Panc1 (cell line): ENCODE measurements at regions of chr6 and their contacts with region 1.

Region 1: DNA sequence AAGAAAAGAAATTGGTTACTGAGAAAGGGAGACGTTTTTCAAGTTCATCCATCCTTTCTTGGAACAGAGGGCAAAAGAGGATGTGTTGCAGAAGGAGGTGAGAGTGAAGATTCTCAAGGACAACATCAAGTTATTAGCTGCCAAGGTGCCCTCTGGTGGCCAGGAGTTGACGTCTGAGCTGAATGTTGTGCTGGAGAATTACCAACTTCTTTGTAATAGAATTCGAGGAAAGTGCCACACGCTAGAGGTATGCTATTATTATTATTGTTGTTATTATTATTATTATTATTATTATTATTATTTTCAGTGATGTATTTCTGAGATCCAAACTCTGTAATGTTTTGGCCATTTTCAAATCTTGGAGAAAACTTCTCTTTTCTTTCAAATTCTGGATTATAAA is 197.0 kb downstream of the UTRN start:
- DNase-seq: peak; percentile 77
- ATAC-seq: peak; percentile 93
- H3K4me3 ChIP-seq: no peak overlapping the region
- H3K27ac ChIP-seq: no peak overlapping the region
- H3K4me1 ChIP-seq: no peaks in the 10 kb centered on the region
- H3K27me3 ChIP-seq: no peaks in the 10 kb centered on the region
- CTCF ChIP-seq: peak; percentile 78

Region 2: DNA sequence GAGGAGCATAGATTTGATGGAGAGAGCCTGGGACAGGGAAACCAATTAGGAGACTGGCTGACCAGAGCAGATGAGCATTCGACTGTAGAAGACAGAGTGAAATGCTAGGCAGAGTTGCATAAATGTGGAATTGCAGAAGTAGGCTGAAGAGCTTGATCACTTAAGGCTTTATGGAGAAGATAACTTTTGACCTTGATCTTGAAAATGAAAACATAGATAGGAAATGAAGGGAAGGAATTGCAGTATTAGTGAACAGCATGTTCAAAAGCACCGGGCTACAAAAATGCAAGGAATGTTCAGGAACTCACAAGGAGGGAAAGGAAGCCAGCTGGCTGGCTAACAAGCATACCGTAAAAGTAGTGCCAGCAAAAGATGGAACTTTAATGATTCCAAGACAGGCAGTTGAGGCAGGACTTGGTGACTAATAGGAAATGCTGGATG is 659.5 kb before region 1 on chr6:
- CTCF ChIA-PET with region 1: no interaction called
- POLR2A ChIA-PET with region 1: no interaction called
- in situ Hi-C with region 1: no loop called
- intact Hi-C with region 1: no loop called
- DNase-seq: no peak
- ATAC-seq: no peak
- H3K4me3 ChIP-seq: no peak overlapping the region
- H3K27ac ChIP-seq: no peak overlapping the region; the same call in 1 of the 2 replicates
- H3K4me1 ChIP-seq: peaks cover 10% of the 10 kb centered on the region
- H3K27me3 ChIP-seq: no peaks in the 10 kb centered on the region
- CTCF ChIP-seq: no peak

Region 3: GRCh38 chr6:144104898-144105487 is 377.1 kb before region 1 on chr6:
- CTCF ChIA-PET with region 1: interaction called, 5 read pairs
- POLR2A ChIA-PET with region 1: interaction called, 4 read pairs
- in situ Hi-C with region 1: loop called (anchors 25 kb)
- intact Hi-C with region 1: loop called (anchors 1 kb)
- DNase-seq: peak; percentile 70
- ATAC-seq: peak; percentile 89
- H3K4me3 ChIP-seq: no peak overlapping the region
- H3K27ac ChIP-seq: no peak overlapping the region
- H3K4me1 ChIP-seq: no peaks in the 10 kb centered on the region
- H3K27me3 ChIP-seq: no peaks in the 10 kb centered on the region
- CTCF ChIP-seq: peak; percentile 72; the same call in 1 of the 2 replicates

Region 4: DNA sequence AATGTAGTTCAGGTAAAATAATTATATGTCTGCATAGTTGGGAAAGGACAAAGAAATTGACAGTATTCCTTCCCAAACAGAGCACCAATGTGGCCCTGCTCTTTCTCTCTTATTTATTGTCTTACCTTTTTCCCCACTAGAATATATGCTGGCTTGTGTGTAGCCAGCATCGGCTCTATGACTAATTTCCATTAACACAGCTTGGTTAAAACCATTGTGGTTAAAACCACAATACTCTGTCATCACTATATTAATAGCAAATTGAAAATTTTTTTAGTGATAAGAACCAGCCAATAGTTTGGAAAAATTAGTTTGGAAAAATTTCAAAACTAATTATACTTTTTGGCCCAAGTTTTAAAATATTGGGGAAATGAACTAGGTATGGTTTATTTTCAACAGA is 338.1 kb after region 1 on chr6:
- CTCF ChIA-PET with region 1: no interaction called
- POLR2A ChIA-PET with region 1: no interaction called
- in situ Hi-C with region 1: no loop called
- intact Hi-C with region 1: no loop called
- DNase-seq: no peak
- ATAC-seq: no peak
- H3K4me3 ChIP-seq: no peak overlapping the region
- H3K27ac ChIP-seq: no peak overlapping the region
- H3K4me1 ChIP-seq: no peaks in the 10 kb centered on the region
- H3K27me3 ChIP-seq: no peaks in the 10 kb centered on the region
- CTCF ChIP-seq: no peak